CD14-positive monocyte (primary cell): ENCODE measurements at regions of chr16 and their contacts with region 1.

Region 1: GRCh38 chr16:200388-200787 is 20.1 kb downstream of the HBQ1 start:
- DNase-seq: no peak
- H3K4me3 ChIP-seq: no peak overlapping the region
- H3K4me3 Mint-ChIP-seq: no peak overlapping the region
- H3K27ac ChIP-seq: no peak overlapping the region
- H3K27ac Mint-ChIP-seq: no peak overlapping the region
- H3K4me1 ChIP-seq: no peaks in the 10 kb centered on the region
- H3K4me1 Mint-ChIP-seq: no peaks in the 10 kb centered on the region
- H3K27me3 ChIP-seq: no peaks in the 10 kb centered on the region
- H3K27me3 Mint-ChIP-seq: no peaks in the 10 kb centered on the region
- CTCF ChIP-seq: no peak

Region 2: GRCh38 chr16:252366-253337 is 52.3 kb after region 1 on chr16:
- intact Hi-C with region 1: no loop called
- DNase-seq: peak in 2 of 3 donors; percentile 8 to 16
- H3K4me3 ChIP-seq: peak overlapping the region; percentile 8 to 55 (median 16)
- H3K4me3 Mint-ChIP-seq: peak overlapping the region; percentile 79
- H3K27ac ChIP-seq: peak overlapping the region; percentile 11 to 35
- H3K27ac Mint-ChIP-seq: peak overlapping the region; percentile 37 to 93 (median 76)
- H3K4me1 ChIP-seq: peaks cover 9 to 11% of the 10 kb centered on the region in 2 donors
- H3K4me1 Mint-ChIP-seq: peaks cover 10% of the 10 kb centered on the region
- H3K27me3 ChIP-seq: no peaks in the 10 kb centered on the region
- H3K27me3 Mint-ChIP-seq: peaks cover 0 to 3% (median 0%) of the 10 kb centered on the region in 3 donors
- CTCF ChIP-seq: no peak

Region 3: DNA sequence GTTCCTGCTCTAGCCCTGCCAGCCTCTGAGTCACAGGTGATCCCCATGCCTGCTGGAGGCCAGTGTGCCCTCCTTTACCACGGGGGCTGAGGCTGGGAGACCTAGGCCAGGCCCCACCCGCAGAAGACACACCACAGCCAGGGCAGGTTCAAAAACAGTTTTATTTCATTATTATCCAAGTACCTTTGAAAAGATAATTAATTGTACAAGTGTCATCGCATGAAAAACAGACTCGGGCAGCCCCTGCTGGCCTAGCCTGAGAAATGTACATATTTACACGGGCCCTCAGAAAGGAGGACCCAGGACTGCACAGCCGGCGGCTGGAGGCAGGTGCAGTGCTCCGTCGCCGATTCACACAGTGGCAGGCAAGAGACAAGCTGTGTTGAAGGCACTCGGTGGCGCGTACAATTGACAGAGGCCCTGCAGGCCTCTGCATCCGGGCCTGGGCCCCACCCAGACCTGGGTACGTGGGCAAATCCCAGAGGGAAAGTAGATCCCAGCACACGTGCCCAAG is 87.0 kb after region 1 on chr16:
- intact Hi-C with region 1: loop called in 1 of 2 experiments (anchors 5 kb)
- DNase-seq: no peak
- H3K4me3 ChIP-seq: no peak overlapping the region
- H3K4me3 Mint-ChIP-seq: no peak overlapping the region
- H3K27ac ChIP-seq: no peak overlapping the region
- H3K27ac Mint-ChIP-seq: no peak overlapping the region
- H3K4me1 ChIP-seq: no peaks in the 10 kb centered on the region
- H3K4me1 Mint-ChIP-seq: no peaks in the 10 kb centered on the region
- H3K27me3 ChIP-seq: no peaks in the 10 kb centered on the region
- H3K27me3 Mint-ChIP-seq: peaks cover 0 to 6% (median 3%) of the 10 kb centered on the region in 3 donors
- CTCF ChIP-seq: no peak